Transverse colon (tissue), 4 donors: ENCODE measurements at regions of chr15 and their contacts with region 1.

Region 1: DNA sequence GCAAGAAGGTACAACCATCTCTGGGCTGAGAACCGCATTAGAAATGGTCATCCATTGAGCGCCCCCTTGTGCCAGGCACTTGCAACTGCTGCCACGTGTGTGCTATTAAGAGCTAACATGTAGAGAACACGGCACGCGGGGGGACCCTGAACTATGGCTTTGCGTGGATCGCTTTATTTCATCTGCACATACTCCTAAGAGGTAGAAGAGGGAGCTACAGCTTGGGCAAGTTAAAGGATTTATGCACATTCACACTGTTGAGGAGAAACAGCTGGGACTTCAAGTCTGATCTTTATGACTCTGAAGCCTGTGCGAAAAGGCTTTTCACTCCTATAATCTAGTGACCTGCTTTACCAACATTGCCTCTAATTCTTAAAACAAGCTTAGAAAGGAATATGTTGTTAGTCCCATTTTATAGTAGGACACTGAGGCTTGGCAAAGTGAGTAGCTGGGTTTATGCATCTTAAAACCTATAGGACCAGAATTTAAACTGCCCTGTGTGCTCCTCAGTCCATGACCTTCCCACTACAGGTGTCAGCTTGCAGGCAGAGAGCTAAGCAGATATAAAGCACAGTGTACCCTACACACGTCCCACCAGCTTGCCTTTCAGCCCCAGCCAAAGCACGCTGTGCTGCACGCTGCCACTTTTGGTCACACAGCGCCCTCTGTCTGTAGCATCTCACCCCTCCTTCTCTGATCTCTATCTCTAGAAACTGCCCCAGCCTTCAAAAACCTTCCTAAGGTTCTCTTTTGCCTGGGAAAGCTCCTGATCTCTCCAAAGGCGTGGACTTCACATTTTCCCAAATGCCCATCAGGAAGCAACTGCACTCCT is 57.8 kb downstream of the STARD5 start:
- DNase-seq: peak; percentile 86
- H3K4me3 ChIP-seq: peak overlapping the region in 1 of 4 donors; percentile 6
- H3K27ac ChIP-seq: no peak overlapping the region
- H3K4me1 ChIP-seq: peaks cover 4 to 11% (median 7%) of the 10 kb centered on the region in 4 donors
- H3K27me3 ChIP-seq: peaks cover 5% of the 10 kb centered on the region
- CTCF ChIP-seq: peak; percentile 76 to 94 (median 86)
- EP300 ChIP-seq: no peak
- POLR2A ChIP-seq: no peak

Region 2: DNA sequence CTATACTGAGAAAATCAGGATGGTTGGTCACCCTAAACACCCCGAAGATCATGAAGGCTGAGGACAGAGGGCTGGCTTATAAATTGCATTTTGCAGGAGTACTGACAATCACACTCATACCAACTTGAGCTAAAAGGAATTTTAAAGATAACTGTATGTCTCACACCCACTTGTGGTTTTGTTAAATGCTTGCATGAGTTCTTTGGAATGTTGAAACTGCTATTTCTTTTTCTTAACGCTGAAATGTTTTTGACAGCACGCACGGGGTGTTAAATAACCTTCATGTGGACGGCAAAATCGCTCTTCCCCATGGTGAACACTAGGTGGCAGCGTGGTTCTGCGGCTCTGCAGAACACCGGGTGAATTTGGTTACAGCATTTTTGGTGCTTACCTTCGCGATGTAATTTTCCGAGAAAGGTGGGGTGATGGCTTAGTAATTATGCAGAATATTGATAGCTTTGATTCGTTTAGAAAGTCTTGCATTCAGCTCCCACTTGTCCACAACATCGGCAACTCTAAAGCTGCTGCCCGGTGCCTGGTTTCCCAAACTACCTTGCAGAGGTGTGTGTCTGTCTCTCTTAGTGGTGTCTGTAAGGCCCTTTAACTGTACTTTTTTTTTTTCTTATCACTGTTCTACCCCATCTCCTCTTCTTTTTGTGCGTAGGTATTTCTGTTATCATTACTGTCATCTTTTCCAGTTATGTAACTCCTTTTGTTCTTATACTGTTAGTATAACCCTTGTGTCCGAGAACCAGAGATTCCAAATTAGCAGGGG is 810.3 kb before region 1 on chr15:
- in situ Hi-C with region 1: loop called in 1 of 4 experiments (anchors 25 kb)
- intact Hi-C with region 1: no loop called
- DNase-seq: peak; percentile 42
- H3K4me3 ChIP-seq: no peak overlapping the region
- H3K27ac ChIP-seq: no peak overlapping the region
- H3K4me1 ChIP-seq: peaks cover 0 to 5% (median 0%) of the 10 kb centered on the region in 4 donors
- H3K27me3 ChIP-seq: no peaks in the 10 kb centered on the region
- CTCF ChIP-seq: peak; percentile 85 to 94 (median 89)
- EP300 ChIP-seq: no peak
- POLR2A ChIP-seq: no peak

Region 3: DNA sequence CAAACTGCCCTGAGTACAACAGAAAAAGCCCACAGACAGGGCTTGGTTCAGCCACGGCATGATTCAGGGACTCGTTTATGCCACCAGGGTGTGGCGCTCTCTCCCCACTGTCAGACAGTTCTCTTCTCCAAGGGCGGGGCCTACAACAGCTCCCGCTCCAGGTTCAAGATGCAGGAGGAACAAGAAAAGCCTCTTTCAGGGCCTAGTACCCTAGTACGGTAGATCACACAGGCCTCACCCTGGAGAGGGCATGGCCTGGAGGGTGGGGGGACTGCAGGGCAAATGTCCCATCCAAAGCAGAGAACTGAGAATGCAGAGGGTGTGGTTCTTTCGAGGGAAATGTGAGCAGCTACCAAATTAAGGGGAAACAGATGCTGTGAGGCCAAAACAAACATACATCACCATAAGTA is 288.5 kb before region 1 on chr15:
- in situ Hi-C with region 1: loop called (anchors 10 to 25 kb)
- intact Hi-C with region 1: loop called (anchors 5 kb)
- DNase-seq: peak; percentile 78
- H3K4me3 ChIP-seq: no peak overlapping the region
- H3K27ac ChIP-seq: no peak overlapping the region
- H3K4me1 ChIP-seq: peaks cover 0 to 4% (median 1%) of the 10 kb centered on the region in 4 donors
- H3K27me3 ChIP-seq: no peaks in the 10 kb centered on the region
- CTCF ChIP-seq: peak; percentile 53 to 62 (median 56)
- EP300 ChIP-seq: no peak
- POLR2A ChIP-seq: no peak

Region 4: DNA sequence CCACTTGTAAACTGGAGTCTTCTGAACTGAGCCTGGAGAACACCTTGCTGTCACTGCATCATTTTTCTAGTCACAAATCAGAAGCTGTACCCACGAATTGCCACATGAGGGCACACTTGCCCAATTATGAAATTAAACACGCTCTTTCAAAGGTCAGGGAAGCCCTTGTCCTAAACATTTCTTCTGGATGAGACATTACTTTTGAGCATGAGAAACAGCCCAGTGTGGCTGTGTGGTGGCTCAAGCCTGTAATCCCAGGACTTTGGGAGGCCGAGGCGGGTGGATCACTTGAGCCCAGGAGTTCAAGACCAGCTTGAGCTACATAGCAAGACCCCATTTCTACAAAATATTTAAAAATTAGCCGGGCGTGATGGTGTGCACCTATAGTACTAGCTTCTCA is 159.6 kb before region 1 on chr15:
- in situ Hi-C with region 1: loop called (anchors 5 to 25 kb)
- intact Hi-C with region 1: loop called (anchors 5 kb)
- DNase-seq: peak; percentile 37
- H3K4me3 ChIP-seq: no peak overlapping the region
- H3K27ac ChIP-seq: no peak overlapping the region
- H3K4me1 ChIP-seq: no peaks in the 10 kb centered on the region
- H3K27me3 ChIP-seq: no peaks in the 10 kb centered on the region
- CTCF ChIP-seq: peak; percentile 64 to 68 (median 65)
- EP300 ChIP-seq: no peak
- POLR2A ChIP-seq: no peak

Region 5: DNA sequence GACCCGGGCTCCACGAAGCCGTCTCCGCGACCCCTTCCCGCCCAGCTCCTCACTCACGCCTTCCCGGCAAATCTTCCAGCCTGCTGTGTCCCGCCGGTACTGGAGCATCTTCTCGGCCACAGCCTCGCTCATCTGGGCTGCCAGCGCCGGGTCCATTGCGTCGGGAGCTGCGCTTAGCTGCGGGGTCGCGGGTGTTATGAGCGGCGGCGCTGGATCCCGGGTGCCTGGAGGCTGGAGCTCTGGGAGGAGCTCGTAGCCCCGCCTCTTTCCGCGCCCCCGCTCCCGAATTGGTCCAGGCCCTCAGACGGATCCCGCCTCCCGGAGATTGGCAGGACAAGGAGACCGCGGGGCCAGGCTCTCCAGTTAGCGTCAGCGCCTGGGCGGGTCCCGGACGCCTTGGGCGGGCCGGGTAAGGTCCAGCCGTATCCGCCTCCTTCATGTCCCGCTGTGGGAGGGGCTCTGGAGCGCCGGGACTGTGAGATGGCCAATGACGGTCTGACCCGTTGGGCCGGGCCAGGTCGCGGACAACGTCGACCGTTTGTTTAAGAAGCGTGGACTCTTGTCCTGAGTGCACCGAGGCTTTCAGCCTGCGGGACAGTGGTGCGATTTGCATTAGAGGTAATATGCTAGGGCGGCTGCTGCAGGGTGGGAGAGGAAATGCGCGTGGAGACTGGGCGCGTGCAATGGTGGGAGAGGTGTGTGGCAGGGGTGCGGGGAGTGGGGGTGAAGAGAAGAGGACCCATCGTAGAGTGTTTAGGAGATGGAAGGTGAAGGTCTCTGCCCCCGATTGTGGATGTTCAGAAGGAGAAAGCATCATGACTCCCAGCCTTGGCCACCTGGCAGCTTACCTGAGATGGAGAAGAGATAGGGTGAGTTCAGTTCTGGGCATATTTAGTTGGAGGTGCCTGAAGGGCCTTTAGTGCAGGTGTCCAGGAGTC is 58.1 kb after region 1 on chr15 and contains the start of gene STARD5:
- in situ Hi-C with region 1: no loop called
- intact Hi-C with region 1: loop called (anchors 10 kb)
- DNase-seq: peak; percentile 100
- H3K4me3 ChIP-seq: peak within 1 kb of the TSS; percentile 70 to 94 (median 86)
- H3K27ac ChIP-seq: peak within 1 kb of the TSS; percentile 83 to 95 (median 91)
- H3K4me1 ChIP-seq: peaks cover 4 to 20% (median 11%) of the 10 kb centered on the region in 4 donors
- H3K27me3 ChIP-seq: no peaks in the 10 kb centered on the region
- CTCF ChIP-seq: no peak
- EP300 ChIP-seq: no peak
- POLR2A ChIP-seq: peak; percentile 97
- total RNA-seq, gene STARD5: 11.2 to 54.5 (median 41.3) TPM

Region 6: DNA sequence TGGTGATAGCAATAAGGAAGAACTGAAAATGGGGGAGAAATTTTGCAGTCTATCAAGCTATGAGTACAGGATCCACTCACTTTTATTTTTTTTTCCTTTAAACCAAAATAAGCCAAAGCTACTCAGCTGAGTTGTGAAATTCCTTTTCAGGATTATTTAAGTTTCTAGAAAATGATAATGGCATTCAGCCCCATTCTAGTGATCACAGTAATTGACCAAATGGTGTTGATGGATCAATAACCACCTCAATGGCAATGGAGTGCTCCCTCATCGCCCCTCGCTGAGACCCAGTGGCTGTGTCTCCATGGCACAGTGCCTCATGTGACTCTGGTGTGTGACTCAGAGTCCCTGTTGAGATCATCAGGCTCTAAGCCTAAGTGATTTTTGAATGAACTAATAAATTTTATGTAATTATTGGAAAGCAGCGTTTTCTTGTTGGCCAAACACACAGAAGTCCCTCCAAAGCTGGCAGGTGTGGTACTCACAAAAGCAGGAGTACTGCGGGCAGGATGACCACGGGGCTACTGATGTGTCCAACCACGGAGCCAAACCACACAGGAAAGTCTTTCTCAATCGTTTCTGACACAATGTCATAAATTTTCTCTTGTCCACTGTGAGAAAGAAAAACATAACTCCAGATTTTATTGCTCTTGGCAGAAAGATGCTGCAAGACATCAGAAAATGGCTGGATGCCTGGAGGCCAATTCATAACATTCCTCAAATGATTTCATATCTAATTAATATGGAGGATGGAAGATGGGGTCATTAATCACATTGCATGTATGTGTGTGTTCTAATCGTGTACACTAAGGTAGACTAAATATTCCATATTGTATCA is 72.2 kb after region 1 on chr15:
- in situ Hi-C with region 1: no loop called
- intact Hi-C with region 1: no loop called
- DNase-seq: no peak
- H3K4me3 ChIP-seq: no peak overlapping the region
- H3K27ac ChIP-seq: peak overlapping the region in 3 of 4 donors; percentile 10 to 22 (median 20)
- H3K4me1 ChIP-seq: peaks cover 0 to 18% (median 7%) of the 10 kb centered on the region in 4 donors
- H3K27me3 ChIP-seq: no peaks in the 10 kb centered on the region
- CTCF ChIP-seq: no peak
- EP300 ChIP-seq: no peak
- POLR2A ChIP-seq: no peak